Right ventricle myocardium superior (tissue), 1 donor: ENCODE measurements at regions of chr17 and their contacts with region 1.

Region 1: DNA sequence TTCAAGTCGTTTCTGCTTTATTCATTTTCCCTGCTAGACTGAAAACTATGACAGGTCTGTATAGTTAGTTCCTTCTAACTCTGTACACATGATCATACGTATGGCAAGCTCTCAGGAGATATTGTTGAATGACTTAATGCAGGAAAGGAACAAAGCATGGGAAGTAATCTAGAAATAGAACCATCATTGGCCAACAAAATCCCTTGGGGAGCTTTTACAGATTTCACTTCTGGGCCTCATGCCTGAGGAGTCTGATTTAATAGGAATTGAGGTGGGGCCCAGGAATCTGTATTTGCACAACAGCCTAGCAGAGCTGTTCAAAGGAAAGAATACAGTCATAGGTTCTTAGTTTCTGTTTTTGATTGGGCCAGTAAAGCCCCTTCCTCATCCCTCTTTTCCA is 229.2 kb downstream of the MAP2K6 start:
- DNase-seq: no peak
- ATAC-seq: no peak

Region 2: GRCh38 chr17:69539781-69540319 is 103.8 kb before region 1 on chr17:
- intact Hi-C with region 1: no loop called
- DNase-seq: no peak
- ATAC-seq: no peak

Region 3: DNA sequence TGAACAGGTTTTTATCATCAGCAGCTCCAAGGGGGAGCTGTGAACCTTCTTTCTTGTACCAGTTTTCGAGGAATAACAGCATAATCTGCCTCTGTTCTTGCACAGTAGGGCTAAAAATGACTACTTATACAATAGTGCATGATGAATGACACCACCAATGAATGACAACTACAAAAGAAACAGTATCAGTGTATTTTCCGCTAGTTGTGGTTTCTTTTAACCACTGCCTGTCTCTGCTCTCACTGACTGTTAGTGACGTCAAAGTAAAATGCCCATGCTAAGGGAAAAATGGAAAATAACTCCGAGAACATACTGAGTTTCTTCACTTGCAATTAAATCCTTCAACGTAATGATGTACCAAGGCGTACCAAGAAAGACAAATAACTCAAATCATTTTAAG is 65.8 kb after region 1 on chr17:
- intact Hi-C with region 1: loop called (anchors 10 kb)
- DNase-seq: no peak
- ATAC-seq: no peak